ENCODE measurements at regions of chr4 and their contacts with region 1.

Region 1: GRCh38 chr4:74133786-74134499 is 24.0 kb upstream of the MTHFD2L start:
- DNase-seq: peak; percentile 77
- H3K4me3 Mint-ChIP-seq: peak overlapping the region; percentile 30
- H3K27ac Mint-ChIP-seq: peak overlapping the region; percentile 24
- H3K4me1 Mint-ChIP-seq: peaks cover 25% of the 10 kb centered on the region
- H3K27me3 Mint-ChIP-seq: no peaks in the 10 kb centered on the region
- CTCF ChIP-seq: peak; percentile 38

Region 2: DNA sequence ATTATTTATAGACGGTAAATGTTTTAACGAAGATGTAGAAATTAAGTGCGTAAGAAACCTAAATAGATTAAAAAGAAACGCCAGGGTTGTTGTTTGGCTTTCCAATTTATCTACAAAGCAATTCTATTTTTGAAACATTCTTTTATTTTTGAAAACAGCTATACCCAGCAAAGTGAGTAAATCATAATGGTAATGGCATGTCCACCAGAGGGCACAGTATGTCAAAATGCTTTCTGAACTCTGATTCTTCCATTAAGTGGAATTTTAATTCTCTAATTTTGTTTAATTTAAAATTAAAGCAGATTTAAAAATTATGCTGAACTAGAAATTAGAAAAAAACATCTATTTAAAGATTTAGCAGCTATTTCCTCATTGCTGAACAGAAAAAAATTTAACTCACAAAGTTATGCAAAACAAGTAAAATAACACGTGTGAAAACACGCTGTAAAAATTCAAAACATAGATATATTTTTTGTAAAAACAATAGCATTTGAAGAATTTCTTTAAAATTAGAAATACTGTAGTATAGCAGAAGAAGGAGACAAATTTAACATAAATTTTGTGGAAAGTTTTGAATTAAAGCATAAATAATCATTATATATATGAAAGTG is 540.2 kb before region 1 on chr4:
- CTCF ChIA-PET with region 1: no interaction called
- intact Hi-C with region 1: loop called (anchors 10 kb)
- DNase-seq: no peak
- H3K4me3 Mint-ChIP-seq: no peak overlapping the region
- H3K27ac Mint-ChIP-seq: no peak overlapping the region
- H3K4me1 Mint-ChIP-seq: peaks cover 21% of the 10 kb centered on the region
- H3K27me3 Mint-ChIP-seq: no peaks in the 10 kb centered on the region
- CTCF ChIP-seq: no peak

Region 3: DNA sequence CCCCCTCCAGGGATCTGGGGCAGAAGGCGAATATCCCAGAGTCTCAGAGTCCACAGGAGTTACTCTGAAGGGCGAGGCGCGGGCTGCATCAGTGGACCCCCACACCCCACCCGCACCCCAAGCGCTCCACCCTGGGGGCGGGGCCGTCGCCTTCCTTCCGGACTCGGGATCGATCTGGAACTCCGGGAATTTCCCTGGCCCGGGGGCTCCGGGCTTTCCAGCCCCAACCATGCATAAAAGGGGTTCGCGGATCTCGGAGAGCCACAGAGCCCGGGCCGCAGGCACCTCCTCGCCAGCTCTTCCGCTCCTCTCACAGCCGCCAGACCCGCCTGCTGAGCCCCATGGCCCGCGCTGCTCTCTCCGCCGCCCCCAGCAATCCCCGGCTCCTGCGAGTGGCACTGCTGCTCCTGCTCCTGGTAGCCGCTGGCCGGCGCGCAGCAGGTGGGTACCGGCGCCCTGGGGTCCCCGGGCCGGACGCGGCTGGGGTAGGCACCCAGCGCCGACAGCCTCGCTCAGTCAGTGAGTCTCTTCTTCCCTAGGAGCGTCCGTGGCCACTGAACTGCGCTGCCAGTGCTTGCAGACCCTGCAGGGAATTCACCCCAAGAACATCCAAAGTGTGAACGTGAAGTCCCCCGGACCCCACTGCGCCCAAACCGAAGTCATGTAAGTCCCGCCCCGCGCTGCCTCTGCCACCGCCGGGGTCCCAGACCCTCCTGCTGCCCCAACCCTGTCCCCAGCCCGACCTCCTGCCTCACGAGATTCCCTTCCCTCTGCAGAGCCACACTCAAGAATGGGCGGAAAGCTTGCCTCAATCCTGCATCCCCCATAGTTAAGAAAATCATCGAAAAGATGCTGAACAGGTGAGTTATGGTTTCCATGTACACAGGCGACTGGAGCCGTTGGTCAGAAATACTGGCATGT is 264.6 kb before region 1 on chr4 and contains the start of gene CXCL1:
- CTCF ChIA-PET with region 1: interaction called, 5 read pairs
- intact Hi-C with region 1: loop called (anchors 10 kb)
- DNase-seq: peak; percentile 88
- H3K4me3 Mint-ChIP-seq: peak within 1 kb of the TSS; percentile 88
- H3K27ac Mint-ChIP-seq: peak within 1 kb of the TSS; percentile 29
- H3K4me1 Mint-ChIP-seq: peaks cover 18% of the 10 kb centered on the region
- H3K27me3 Mint-ChIP-seq: no peaks in the 10 kb centered on the region
- CTCF ChIP-seq: no peak
- total RNA-seq, gene CXCL1: 212 and 414 TPM in 2 replicates

Region 4: DNA sequence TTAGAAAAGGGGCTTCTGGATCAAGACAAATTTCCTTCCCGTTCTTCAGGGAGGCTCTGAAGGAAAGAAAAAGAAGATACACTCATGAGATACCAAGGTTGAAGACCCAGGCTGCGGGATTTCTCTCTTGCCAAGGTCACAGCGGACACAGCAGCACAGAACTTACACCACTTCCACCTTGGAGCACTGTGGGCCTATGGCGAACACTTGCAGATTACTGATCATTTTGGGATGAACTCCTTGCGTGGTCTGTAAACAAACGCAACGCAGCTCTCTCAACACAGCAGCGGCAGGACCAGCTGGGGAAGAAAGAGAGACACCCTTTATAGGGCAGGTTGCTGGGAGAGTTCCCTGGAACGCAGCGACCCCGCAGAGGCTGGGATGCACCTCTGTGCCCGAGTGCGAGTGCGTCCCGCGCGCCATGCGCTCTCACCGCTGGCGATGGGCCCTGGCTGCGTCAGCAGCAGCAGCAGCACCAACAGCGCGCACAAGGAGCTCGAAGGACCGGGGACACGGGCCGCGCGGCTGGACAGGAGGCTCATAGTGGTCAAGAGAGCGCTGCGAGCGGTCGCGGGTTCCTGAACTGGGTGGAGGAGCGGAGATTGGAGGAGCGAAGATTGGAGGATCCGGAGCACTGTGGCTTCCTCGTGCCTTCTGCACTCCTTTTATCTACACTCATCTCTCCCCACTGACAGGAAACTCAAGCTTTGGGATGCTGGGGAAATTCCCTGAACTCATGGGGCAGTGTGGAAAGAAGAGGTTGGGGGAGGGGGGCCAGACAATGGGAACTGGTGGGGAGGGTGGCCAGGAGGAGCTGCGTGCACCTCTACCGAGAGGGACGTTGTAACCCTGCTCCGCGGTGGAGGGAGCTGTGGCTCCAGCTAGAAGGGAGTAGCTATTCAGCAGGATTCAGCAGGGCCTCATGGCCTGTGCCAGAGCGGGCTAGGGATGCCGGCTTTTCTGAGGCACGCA is 135.6 kb before region 1 on chr4 and contains the start of gene CXCL5:
- CTCF ChIA-PET with region 1: interaction called, 18 read pairs
- intact Hi-C with region 1: loop called (anchors 1 kb)
- DNase-seq: peak; percentile 91
- H3K4me3 Mint-ChIP-seq: peak within 1 kb of the TSS; percentile 91
- H3K27ac Mint-ChIP-seq: peak within 1 kb of the TSS; percentile 96
- H3K4me1 Mint-ChIP-seq: peaks cover 31% of the 10 kb centered on the region
- H3K27me3 Mint-ChIP-seq: no peaks in the 10 kb centered on the region
- CTCF ChIP-seq: no peak
- total RNA-seq, gene CXCL5: 1,110 and 1,906 TPM in 2 replicates

Region 5: GRCh38 chr4:74098450-74098994 is 35.4 kb before region 1 on chr4:
- CTCF ChIA-PET with region 1: interaction called, 21 read pairs
- intact Hi-C with region 1: loop called (anchors 5 kb)
- DNase-seq: no peak
- H3K4me3 Mint-ChIP-seq: peak overlapping the region; percentile 79
- H3K27ac Mint-ChIP-seq: peak overlapping the region; percentile 98
- H3K4me1 Mint-ChIP-seq: peaks cover 38% of the 10 kb centered on the region
- H3K27me3 Mint-ChIP-seq: no peaks in the 10 kb centered on the region
- CTCF ChIP-seq: no peak